ENCODE measurements at regions of chr19 and their contacts with region 1.

Region 1: GRCh38 chr19:55476100-55476775 is at the start of gene ZNF628:
- DNase-seq: peak; percentile 99
- ATAC-seq: peak; percentile 96
- H3K4me3 Mint-ChIP-seq: peak within 1 kb of the TSS; percentile 84
- H3K27ac Mint-ChIP-seq: peak within 1 kb of the TSS; percentile 88
- H3K4me1 Mint-ChIP-seq: peaks cover 32% of the 10 kb centered on the region
- H3K27me3 Mint-ChIP-seq: no peaks in the 10 kb centered on the region
- total RNA-seq, gene ZNF628: 5.6 to 6.8 TPM

Region 2: GRCh38 chr19:55385740-55386529 is 90.3 kb before region 1 on chr19 and contains the start of gene RPL28:
- CTCF ChIA-PET with region 1: no interaction called
- POLR2A ChIA-PET with region 1: no interaction called
- intact Hi-C with region 1: loop called in 1 of 2 experiments (anchors 1 kb)
- DNase-seq: peak; percentile 98
- ATAC-seq: peak; percentile 85
- H3K4me3 Mint-ChIP-seq: peak within 1 kb of the TSS; percentile 89
- H3K27ac Mint-ChIP-seq: peak within 1 kb of the TSS; percentile 98
- H3K4me1 Mint-ChIP-seq: peaks cover 51% of the 10 kb centered on the region
- H3K27me3 Mint-ChIP-seq: no peaks in the 10 kb centered on the region
- total RNA-seq, gene RPL28: 2,751 to 4,078 TPM

Region 3: DNA sequence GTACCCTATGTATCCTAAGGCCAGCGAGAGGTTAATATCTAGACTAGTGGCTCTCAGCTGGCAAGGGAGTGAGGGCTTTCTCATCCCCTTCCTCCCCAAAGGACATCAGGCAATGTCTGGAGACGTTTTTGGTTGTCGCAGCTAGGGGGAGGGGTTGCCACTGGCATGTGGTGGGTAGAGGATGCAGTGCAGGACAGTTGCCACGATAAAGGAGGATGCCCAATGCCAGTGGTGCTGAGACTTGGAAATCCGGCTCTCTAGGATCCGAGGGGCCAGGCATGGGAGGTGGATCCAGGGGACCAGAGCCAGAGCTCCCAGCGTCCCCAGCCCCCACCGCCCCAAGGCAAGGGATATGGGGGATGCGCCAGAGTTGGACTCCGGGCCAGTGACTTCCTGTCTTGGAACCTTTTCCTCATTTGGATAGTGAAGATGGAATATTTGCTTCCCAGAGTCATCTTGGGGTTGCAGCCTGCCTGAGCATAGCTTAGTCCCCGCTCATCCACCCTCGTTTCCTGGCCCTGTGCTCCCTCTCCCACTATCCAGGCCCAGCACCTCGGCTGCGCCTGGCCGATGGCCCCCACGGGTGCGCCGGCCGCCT is 16.9 kb after region 1 on chr19:
- CTCF ChIA-PET with region 1: no interaction called
- POLR2A ChIA-PET with region 1: no interaction called
- intact Hi-C with region 1: no loop called
- DNase-seq: no peak
- ATAC-seq: no peak
- H3K4me3 Mint-ChIP-seq: no peak overlapping the region
- H3K27ac Mint-ChIP-seq: no peak overlapping the region
- H3K4me1 Mint-ChIP-seq: no peaks in the 10 kb centered on the region
- H3K27me3 Mint-ChIP-seq: peaks cover 2% of the 10 kb centered on the region

Region 4: DNA sequence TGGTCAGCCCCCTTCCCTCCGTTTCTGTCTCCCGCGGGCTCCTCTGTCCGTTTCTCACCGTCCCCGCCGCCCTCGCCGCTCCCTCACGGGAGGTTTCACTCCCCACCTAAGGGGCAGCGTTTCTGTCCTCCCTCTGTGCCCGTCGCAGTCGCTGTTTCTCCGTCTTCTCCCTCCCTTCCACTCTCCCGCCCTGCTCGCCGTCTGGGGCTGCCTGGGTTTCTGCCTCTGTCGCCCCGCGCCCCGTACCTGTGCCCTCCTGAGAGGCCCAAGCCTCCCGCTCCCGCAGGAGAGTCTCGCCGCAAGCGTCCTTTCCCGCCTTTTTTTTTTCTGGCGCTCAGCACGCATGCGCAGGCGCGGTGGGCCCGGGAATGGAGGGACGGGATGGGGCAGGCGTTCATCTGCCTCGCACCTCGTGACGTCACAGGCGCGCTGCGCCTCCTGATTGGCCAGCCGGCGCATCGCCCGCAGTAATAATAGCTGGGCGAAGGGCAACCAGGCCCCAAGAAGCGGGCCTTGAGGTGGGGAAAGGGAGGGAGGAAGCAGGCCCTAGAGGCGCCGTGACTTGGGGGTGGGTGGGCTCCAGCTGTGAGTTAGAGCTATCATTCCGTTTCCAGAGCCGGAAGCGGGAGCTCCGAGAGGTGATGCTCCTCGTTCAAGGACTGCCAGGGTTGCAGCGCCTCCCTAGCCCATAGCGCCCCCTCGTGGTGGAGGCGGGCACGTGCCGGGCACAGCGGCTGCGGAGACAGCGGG is 27.4 kb after region 1 on chr19:
- CTCF ChIA-PET with region 1: interaction called, 17 read pairs
- POLR2A ChIA-PET with region 1: interaction called, 3 read pairs
- intact Hi-C with region 1: loop called (anchors 1 kb)
- DNase-seq: peak; percentile 96
- ATAC-seq: peak; percentile 97
- H3K4me3 Mint-ChIP-seq: peak overlapping the region; percentile 65
- H3K27ac Mint-ChIP-seq: peak overlapping the region; percentile 67
- H3K4me1 Mint-ChIP-seq: peaks cover 19% of the 10 kb centered on the region
- H3K27me3 Mint-ChIP-seq: no peaks in the 10 kb centered on the region

Region 5: DNA sequence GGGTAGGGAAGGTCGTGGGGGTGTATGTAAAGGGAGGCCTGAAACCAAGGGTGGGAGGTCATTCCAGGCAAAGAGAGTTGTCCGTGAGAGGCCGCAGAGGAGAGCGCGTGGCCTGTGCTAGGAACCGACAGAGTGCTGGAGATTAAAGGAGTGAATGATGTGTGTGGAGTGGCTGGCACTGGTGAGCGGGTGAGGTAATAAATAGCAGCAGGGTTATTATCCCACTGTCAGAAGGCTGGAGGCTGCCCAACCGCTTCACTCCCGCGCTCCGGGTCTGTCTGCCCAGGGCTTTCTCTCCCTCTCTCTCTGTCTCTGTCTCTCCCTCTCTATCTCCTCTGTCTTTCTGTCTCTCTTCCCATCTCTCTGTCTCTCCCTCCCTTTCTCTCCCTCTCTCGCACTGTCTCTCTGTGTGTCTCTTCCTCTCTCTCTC is 87.0 kb after region 1 on chr19:
- CTCF ChIA-PET with region 1: no interaction called
- POLR2A ChIA-PET with region 1: no interaction called
- intact Hi-C with region 1: no loop called
- DNase-seq: no peak
- ATAC-seq: no peak
- H3K4me3 Mint-ChIP-seq: no peak overlapping the region
- H3K27ac Mint-ChIP-seq: no peak overlapping the region
- H3K4me1 Mint-ChIP-seq: no peaks in the 10 kb centered on the region
- H3K27me3 Mint-ChIP-seq: peaks cover 7% of the 10 kb centered on the region

Region 6: DNA sequence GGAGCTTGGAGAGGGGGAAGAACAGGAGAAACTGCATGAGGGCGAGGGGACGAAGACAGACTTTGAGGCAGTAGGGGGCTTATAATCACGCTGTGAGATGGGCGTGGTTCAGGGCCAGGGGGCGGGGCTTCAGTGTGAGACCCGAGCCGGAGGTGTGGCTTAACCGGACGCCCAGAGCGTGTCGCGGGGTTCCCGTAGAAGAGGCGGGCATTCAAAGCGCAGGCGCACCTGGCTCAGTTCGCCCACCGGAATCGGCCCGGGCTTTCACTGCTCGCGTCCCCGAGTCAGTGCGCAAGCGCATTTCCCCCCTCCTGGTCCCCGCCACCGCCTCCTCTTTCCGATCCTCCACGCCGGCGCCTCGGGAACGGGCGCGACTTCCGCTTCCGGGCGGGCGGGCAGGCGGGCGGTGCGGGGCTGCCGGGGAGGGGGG is 129.0 kb after region 1 on chr19:
- CTCF ChIA-PET with region 1: interaction called, 4 read pairs
- POLR2A ChIA-PET with region 1: no interaction called
- intact Hi-C with region 1: loop called in 1 of 2 experiments (anchors 1 kb)
- DNase-seq: peak; percentile 100
- ATAC-seq: peak; percentile 87
- H3K4me3 Mint-ChIP-seq: peak overlapping the region; percentile 88
- H3K27ac Mint-ChIP-seq: peak overlapping the region; percentile 96
- H3K4me1 Mint-ChIP-seq: peaks cover 57% of the 10 kb centered on the region
- H3K27me3 Mint-ChIP-seq: no peaks in the 10 kb centered on the region

Region 7: DNA sequence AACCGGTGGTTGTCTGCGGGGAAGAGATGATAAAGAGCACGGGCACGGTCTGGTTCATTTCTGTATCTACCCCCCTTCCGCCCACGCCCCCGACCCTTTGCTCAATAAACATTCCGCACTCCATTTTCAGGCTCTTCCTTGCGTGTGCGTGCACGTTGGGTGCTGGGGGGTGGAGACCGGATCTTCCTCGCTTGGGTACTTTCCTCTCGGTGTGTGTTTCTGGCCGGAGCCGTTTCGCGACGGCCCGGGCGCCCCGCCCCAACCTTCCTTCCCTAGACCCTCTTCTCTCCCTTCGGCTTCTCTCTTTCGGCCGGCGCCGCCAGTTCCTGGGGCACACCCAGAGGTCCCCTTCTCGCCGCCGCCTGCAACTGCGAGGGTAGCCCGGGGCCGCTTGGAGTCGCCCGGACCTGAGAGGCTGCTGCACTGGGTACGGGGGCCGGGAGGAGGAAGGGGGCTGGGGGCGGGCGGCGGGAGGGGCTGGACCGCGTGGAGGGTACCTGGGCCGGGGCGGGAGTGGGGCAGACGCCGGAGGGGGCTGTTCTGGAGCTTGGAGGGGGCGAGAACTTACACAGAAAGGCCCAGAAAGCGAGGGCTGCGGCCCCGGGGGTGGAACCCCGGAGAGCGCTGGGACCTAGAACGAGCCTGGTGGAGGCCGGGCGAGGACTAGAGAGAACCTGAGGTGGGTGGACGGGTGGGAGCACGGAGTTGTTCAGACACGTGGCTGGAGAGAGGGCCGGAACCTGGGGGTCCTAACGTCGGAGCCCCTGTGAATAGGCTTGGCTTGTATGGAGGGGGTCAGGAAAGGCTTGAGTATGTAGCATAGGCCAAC is 167.3 kb after region 1 on chr19 and contains the start of gene ZNF581:
- CTCF ChIA-PET with region 1: interaction called, 3 read pairs
- POLR2A ChIA-PET with region 1: no interaction called
- intact Hi-C with region 1: loop called in 1 of 2 experiments (anchors 1 kb)
- DNase-seq: peak; percentile 91
- ATAC-seq: peak; percentile 55
- H3K4me3 Mint-ChIP-seq: peak within 1 kb of the TSS; percentile 93
- H3K27ac Mint-ChIP-seq: peak within 1 kb of the TSS; percentile 99
- H3K4me1 Mint-ChIP-seq: peaks cover 44% of the 10 kb centered on the region
- H3K27me3 Mint-ChIP-seq: no peaks in the 10 kb centered on the region
- total RNA-seq, gene ZNF581: 18.9 to 26.9 TPM

Region 8: DNA sequence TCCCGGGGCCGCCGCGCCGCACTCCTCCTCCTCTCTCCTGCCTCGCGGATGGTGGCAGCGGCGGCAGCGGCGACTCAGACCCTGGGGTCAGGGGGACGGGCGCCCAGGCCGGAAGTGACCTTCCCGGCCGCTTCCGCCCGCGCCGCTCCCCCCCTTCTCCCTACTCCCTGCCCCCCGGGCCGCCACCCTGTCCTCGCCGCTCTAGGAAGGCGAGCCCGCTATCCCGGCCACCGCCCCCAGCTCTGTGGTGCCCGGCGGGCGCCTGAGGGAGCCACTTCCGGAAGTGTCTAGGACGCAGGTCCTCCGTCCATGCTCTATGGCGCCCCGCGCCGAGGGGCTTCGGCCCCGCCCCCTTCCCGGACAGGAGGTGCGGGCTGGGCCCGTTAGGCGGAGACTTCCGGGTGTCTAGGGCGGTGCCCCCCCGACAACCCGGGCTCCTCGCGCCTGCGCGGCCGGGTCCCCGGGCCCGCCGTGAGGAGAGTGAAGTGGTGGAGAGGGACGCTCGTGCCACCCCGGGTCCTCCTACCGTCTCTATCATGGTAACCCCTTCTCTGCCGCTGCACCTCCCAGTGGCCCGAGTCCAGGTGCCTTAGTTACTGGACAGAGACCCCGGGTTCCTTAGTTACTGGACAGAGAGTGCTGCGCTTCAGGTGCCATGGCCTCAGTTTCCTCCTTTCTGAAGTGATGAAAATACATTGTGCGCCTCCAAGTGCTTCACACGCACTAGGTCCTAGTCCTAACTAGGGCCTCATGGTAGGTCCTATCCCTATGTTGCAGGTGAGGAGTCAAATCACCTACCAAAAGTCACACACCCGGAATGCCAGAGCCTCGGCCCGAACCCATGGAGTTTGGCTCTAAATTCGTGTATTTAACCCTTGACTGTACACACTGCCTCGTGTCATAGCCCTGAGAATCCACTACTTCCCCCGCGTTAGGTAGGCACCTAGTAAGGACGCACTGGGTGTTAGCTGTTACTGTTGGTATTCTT is 645.2 kb after region 1 on chr19 and contains the start of gene ZNF787:
- CTCF ChIA-PET with region 1: no interaction called
- POLR2A ChIA-PET with region 1: no interaction called
- intact Hi-C with region 1: loop called in 1 of 2 experiments (anchors 2 kb)
- DNase-seq: peak; percentile 98
- ATAC-seq: peak; percentile 92
- H3K4me3 Mint-ChIP-seq: peak within 1 kb of the TSS; percentile 82
- H3K27ac Mint-ChIP-seq: peak within 1 kb of the TSS; percentile 91
- H3K4me1 Mint-ChIP-seq: peaks cover 48% of the 10 kb centered on the region
- H3K27me3 Mint-ChIP-seq: no peaks in the 10 kb centered on the region
- total RNA-seq, gene ZNF787: 27.6 to 28.4 TPM